ENCODE measurements at regions of chr14 and their contacts with region 1.

Region 1: DNA sequence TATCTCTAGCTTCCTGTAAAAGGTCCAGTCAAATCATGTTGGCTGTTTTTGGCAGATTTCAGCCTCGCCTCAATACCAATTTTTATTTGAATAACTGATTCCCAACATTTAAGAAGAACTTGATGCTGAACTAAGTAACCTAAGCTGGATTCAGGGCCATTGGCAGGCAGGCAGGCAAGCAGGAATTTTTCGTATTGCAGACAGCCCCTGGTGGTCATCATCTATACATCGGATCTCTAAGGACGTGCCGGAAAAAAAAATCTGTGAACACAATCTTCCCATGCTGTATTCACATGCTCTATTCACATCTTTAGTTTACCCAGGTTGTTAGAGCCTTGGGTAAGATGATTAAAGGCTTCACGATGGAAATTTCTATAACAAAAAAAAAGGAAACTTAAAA is 7.0 kb downstream of the VCPKMT start:
- DNase-seq: no peak
- H3K4me3 ChIP-seq: no peak overlapping the region
- H3K27ac ChIP-seq: no peak overlapping the region
- H3K4me1 ChIP-seq: peaks cover 0 to 2% (median under 1%) of the 10 kb centered on the region in 4 donors
- H3K27me3 ChIP-seq: no peaks in the 10 kb centered on the region
- CTCF ChIP-seq: no peak
- EP300 ChIP-seq: no peak
- POLR2A ChIP-seq: no peak

Region 2: DNA sequence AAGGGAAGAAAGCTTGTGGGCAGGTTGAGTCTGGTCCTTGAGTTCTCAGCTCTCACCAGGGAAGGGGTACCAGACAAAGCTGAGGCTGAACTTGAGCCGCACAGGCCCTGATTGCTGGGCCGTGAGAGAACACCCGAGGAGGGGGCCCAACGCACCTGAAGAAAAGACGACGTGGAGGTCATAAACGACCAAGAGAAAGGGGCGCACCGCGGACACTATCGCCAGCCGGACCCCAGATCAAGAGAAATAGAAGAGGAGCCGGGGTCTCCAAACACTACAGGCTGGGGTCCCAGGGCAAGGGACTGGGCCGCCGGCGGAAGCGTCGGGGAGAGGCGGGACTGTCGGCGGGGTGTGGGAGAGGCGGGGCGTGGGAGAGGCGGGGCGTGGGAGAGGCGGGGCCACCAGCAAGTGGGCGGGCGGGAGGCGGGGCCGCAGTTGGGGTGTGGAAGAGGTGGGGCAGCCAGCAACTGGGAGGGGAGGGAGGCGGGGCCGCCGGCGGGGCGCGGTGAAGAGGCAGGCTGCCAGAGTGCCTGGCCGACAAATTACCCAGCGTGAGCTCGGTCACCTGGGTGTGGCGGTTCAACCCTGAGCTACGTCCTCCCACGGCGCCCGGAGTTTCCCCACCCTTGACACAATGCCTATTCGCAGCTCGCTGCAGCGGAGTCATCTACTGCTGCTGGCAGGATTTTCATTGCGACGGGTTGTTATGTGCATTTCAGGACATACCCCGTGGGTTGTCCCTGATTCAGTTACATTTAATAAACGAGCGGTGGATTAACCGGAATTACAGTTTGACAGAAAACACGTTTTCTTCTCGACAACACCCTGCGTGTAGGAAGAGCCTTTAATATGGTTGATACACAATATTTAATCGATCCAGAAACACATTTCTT is 241.3 kb before region 1 on chr14:
- intact Hi-C with region 1: loop called (anchors 5 kb)
- DNase-seq: peak; percentile 99
- H3K4me3 ChIP-seq: peak overlapping the region; percentile 59 to 66 (median 64)
- H3K27ac ChIP-seq: peak overlapping the region; percentile 89 to 96 (median 90)
- H3K4me1 ChIP-seq: peaks cover 10 to 43% (median 41%) of the 10 kb centered on the region in 4 donors
- H3K27me3 ChIP-seq: no peaks in the 10 kb centered on the region
- CTCF ChIP-seq: peak in 1 of 3 experiments; percentile 3
- EP300 ChIP-seq: no peak
- POLR2A ChIP-seq: peak; percentile 44

Region 3: GRCh38 chr14:50003213-50004031 is 105.9 kb before region 1 on chr14:
- intact Hi-C with region 1: loop called (anchors 10 kb)
- DNase-seq: peak; percentile 95
- H3K4me3 ChIP-seq: peak overlapping the region; percentile 59 to 65 (median 60)
- H3K27ac ChIP-seq: peak overlapping the region; percentile 74 to 82 (median 80)
- H3K4me1 ChIP-seq: peaks cover 45 to 56% (median 50%) of the 10 kb centered on the region in 4 donors
- H3K27me3 ChIP-seq: no peaks in the 10 kb centered on the region
- CTCF ChIP-seq: peak in 1 of 3 experiments; percentile 26
- EP300 ChIP-seq: no peak
- POLR2A ChIP-seq: no peak

Region 4: GRCh38 chr14:50215400-50215799 is 106.1 kb after region 1 on chr14:
- intact Hi-C with region 1: no loop called
- DNase-seq: no peak
- H3K4me3 ChIP-seq: no peak overlapping the region
- H3K27ac ChIP-seq: no peak overlapping the region
- H3K4me1 ChIP-seq: peaks cover 18 to 65% (median 49%) of the 10 kb centered on the region in 4 donors
- H3K27me3 ChIP-seq: no peaks in the 10 kb centered on the region
- CTCF ChIP-seq: no peak
- EP300 ChIP-seq: no peak
- POLR2A ChIP-seq: no peak

Measured in esophagus muscularis mucosa (tissue), 4 donors.